ENCODE measurements at regions of chr2 and their contacts with region 1.

Region 1: GRCh38 chr2:121649596-121650314 is 493 bp upstream of the CLASP1 start:
- DNase-seq: peak; percentile 95 to 98 (median 96)
- ATAC-seq: peak; percentile 93
- H3K4me3 ChIP-seq: peak overlapping the region; percentile 88
- H3K27ac ChIP-seq: peak overlapping the region; percentile 100
- H3K4me1 ChIP-seq: peaks cover 12 to 23% of the 10 kb centered on the region in 2 experiments
- H3K27me3 ChIP-seq: no peaks in the 10 kb centered on the region
- CTCF ChIP-seq: no peak
- EP300 ChIP-seq: peak; percentile 57
- POLR2A ChIP-seq: peak; percentile 95
- RAD21 ChIP-seq: no peak

Region 2: GRCh38 chr2:121588357-121588756 is 61.4 kb before region 1 on chr2:
- CTCF ChIA-PET with region 1: no interaction called
- POLR2A ChIA-PET with region 1: no interaction called
- in situ Hi-C with region 1: no loop called
- intact Hi-C with region 1: no loop called
- DNase-seq: no peak
- ATAC-seq: no peak
- H3K4me3 ChIP-seq: no peak overlapping the region
- H3K27ac ChIP-seq: no peak overlapping the region
- H3K4me1 ChIP-seq: peaks cover 0 to 2% of the 10 kb centered on the region in 2 experiments; a peak in 2 of 5 replicates
- H3K27me3 ChIP-seq: no peaks in the 10 kb centered on the region
- CTCF ChIP-seq: no peak
- EP300 ChIP-seq: no peak
- POLR2A ChIP-seq: no peak
- RAD21 ChIP-seq: no peak

Region 3: GRCh38 chr2:121722479-121722878 is 72.7 kb after region 1 on chr2:
- CTCF ChIA-PET with region 1: no interaction called
- POLR2A ChIA-PET with region 1: interaction called, 3 read pairs
- in situ Hi-C with region 1: no loop called
- intact Hi-C with region 1: loop called (anchors 5 kb)
- DNase-seq: peak in 2 of 4 experiments; percentile 62 to 63
- ATAC-seq: peak; percentile 74
- H3K4me3 ChIP-seq: no peak overlapping the region
- H3K27ac ChIP-seq: no peak overlapping the region
- H3K4me1 ChIP-seq: peaks cover 6 to 16% of the 10 kb centered on the region in 2 experiments; a peak in 4 of 5 replicates
- H3K27me3 ChIP-seq: no peaks in the 10 kb centered on the region
- CTCF ChIP-seq: no peak
- EP300 ChIP-seq: no peak
- POLR2A ChIP-seq: no peak
- RAD21 ChIP-seq: 0 out of 4 replicates have a peak, but pooled peaks of 1 of the 2 experiments have one; percentile 21

Measured in K562 (cell line).